A549 (cell line): ENCODE measurements at regions of chr12 and their contacts with region 1.

Region 1: DNA sequence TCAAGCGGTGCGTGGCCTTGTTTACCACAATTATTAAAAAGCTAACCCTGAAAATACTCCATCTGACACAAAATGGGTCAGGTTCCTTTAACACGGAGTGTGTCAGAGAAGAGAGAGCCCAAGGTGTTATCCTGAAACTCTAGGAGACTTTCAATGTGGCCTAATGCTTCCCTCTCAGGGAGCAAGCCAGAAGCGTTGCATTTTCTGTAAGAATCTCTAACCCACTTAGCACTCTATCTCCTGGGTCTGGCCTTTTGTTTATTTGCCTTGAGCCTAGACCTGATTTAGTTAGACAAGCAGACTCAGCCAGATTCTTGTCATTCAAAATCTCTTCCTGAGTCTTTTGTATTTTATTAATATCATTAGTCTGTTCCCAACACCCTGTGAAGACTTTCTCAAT is 184.0 kb upstream of the SYT1 start:
- DNase-seq: no peak
- ATAC-seq: no peak
- H3K4me3 ChIP-seq: no peak overlapping the region
- H3K27ac ChIP-seq: no peak overlapping the region
- H3K4me1 ChIP-seq: peaks cover 8% of the 10 kb centered on the region; the same call in 2 of the 3 replicates
- CTCF ChIP-seq: no peak
- EP300 ChIP-seq: no peak
- POLR2A ChIP-seq: no peak
- RAD21 ChIP-seq: no peak

Region 2: GRCh38 chr12:78698746-78699145 is 18.1 kb after region 1 on chr12:
- CTCF ChIA-PET with region 1: interaction called, 18 read pairs
- POLR2A ChIA-PET with region 1: no interaction called
- DNase-seq: peak; percentile 7 to 70
- ATAC-seq: peak; percentile 74 to 92
- H3K4me3 ChIP-seq: no peak overlapping the region
- H3K27ac ChIP-seq: no peak overlapping the region
- H3K4me1 ChIP-seq: peaks cover 18% of the 10 kb centered on the region; the same call in 2 of the 3 replicates
- CTCF ChIP-seq: no peak
- EP300 ChIP-seq: no peak
- POLR2A ChIP-seq: no peak
- RAD21 ChIP-seq: no peak